IMR-90 (cell line): ENCODE measurements at regions of chr7 and their contacts with region 1.

Region 1: DNA sequence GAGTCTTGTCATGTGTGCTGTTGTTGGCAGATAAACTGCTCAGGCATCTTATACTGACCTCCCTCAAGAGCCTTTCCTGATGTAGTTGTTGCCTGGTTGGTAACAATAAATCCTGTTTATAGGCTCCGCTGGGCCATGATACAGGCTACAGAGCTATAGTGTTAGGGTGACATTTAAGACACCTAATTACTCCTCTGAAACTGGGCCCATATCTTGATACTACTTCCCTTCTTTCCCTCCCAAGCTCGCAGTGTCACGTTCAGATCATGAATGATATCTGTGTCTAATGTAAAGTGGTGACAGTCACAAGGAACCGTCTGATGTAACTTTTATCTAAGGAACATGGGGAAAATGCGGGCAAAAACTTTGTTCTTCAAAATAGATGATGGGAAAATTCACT is 35.4 kb downstream of the CROT start:
- DNase-seq: no peak
- ATAC-seq: no peak
- H3K4me3 ChIP-seq: no peak overlapping the region
- H3K27ac ChIP-seq: no peak overlapping the region
- H3K4me1 ChIP-seq: no peaks in the 10 kb centered on the region
- H3K27me3 ChIP-seq: no peaks in the 10 kb centered on the region
- CTCF ChIP-seq: no peak
- POLR2A ChIP-seq: no peak
- RAD21 ChIP-seq: no peak

Region 2: DNA sequence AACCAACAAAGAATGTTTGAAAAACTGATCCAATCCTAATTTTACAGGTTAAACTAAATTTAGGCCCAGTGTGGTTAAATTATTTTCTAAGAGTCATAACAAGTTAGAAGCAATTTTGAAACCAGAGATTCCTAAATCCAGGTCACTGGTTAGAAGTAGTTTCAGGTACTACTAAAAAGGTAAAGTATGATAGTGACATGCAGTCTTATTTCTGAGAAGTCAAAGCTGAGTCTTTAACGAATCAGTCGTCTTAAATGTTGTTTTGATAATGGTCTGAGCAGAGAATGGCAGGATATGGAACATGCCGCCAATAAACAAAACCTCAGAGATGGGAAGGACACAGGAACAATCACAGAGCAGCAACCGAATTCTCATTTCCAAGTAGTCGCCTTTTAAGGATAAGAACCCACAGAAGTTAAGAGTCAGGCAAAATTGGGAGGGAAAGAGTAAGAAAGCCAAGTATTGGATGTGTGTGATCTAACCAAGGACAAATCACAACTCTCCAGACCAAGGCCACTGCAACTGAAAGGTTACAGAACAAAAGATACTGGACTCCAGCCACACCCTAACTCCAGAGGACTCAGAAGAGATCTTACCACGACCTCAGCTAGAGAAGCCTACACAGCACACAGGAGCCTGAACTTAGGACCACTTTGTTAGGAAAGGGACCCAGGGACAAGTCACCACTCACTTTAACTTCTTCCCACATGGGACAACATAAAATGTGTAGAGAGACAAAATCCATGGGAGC is 181.0 kb before region 1 on chr7:
- CTCF ChIA-PET with region 1: no interaction called
- POLR2A ChIA-PET with region 1: no interaction called
- dilution Hi-C with region 1: no loop called
- in situ Hi-C with region 1: no loop called
- intact Hi-C with region 1: loop called (anchors 10 kb)
- DNase-seq: no peak
- ATAC-seq: no peak
- H3K4me3 ChIP-seq: no peak overlapping the region
- H3K27ac ChIP-seq: no peak overlapping the region
- H3K4me1 ChIP-seq: no peaks in the 10 kb centered on the region
- H3K27me3 ChIP-seq: no peaks in the 10 kb centered on the region
- CTCF ChIP-seq: no peak
- POLR2A ChIP-seq: no peak
- RAD21 ChIP-seq: no peak

Region 3: DNA sequence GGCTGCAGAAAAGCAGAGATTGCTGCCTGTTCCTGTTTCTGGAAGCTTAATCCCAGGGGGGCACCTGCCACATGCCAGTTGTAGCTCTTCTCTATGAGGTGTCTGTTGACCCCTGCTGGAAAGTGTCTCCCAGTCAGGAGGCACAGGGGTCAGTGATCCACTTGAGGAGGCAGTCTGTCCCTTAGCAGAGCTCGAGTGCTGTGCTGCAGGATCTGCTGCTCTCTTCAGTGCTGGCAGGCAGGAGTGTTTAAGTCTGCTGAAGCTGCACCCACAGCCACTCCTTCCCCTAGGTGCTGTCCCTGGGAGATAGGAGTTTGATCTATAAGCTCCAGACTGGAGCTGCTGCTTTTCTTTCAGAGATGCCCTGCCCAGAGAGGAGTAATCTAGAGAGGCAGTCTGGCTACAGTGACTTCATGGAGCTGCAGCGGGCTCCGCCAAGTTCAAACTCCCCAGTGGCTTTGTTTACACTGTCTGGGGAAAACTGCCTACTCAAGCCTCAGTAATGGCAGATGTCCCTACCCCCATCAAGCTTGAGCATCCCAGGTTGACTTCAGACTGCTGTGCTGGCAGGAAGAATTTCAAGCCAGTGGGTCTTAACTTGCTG is 93.1 kb before region 1 on chr7:
- CTCF ChIA-PET with region 1: no interaction called
- POLR2A ChIA-PET with region 1: no interaction called
- dilution Hi-C with region 1: no loop called
- in situ Hi-C with region 1: no loop called
- intact Hi-C with region 1: no loop called
- DNase-seq: no peak
- ATAC-seq: no peak
- H3K4me3 ChIP-seq: no peak overlapping the region
- H3K27ac ChIP-seq: no peak overlapping the region
- H3K4me1 ChIP-seq: no peaks in the 10 kb centered on the region
- H3K27me3 ChIP-seq: no peaks in the 10 kb centered on the region
- CTCF ChIP-seq: no peak
- POLR2A ChIP-seq: no peak
- RAD21 ChIP-seq: no peak